ENCODE measurements at regions of chr10 and their contacts with region 1.

Region 1: DNA sequence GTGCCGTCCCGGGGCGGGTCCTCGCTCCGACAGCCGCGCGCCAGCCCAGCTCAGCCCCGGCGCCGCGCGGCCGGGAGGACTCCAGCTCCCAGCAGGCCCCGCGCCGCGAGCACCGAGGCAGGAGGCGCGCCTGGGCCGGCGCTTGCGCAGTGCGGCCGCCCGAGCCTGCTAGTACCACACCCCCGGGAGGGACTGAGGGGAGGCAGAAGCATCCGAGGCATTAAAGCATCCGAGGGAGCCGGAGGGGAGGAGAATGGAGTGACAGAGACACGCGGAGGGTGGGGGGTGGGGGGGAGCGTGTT is at the start of gene GRK5:
- DNase-seq: peak; percentile 96
- H3K4me3 Mint-ChIP-seq: peak within 1 kb of the TSS; percentile 94
- H3K27ac Mint-ChIP-seq: peak within 1 kb of the TSS; percentile 98
- H3K4me1 Mint-ChIP-seq: peaks cover 45% of the 10 kb centered on the region
- H3K27me3 Mint-ChIP-seq: no peaks in the 10 kb centered on the region
- total RNA-seq, gene GRK5: 26.0 to 27.5 TPM

Region 2: DNA sequence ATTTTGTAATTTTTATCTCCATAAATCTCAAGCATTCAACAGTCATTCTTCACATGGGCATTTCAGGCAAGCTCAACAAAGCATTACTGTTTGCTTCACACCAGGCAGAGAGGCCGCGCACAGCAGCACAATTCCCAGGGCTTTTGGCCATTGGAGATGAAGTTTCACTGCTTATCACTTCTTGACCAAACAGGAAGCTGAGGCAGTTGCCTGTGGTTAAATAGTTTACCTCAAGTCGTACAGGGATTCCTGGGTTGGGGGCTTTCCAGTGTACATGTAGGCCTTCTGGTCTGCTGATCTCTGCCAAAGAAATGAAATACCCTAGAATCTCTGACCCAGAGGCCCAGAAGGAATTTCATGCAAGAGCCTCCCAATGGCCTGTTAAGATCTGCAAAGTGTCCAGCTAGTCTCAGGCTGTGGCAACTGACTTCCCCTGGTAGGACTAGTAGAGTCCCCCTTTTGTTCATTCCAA is 17.5 kb before region 1 on chr10:
- CTCF ChIA-PET with region 1: interaction called, 15 read pairs
- POLR2A ChIA-PET with region 1: no interaction called
- DNase-seq: no peak
- H3K4me3 Mint-ChIP-seq: no peak overlapping the region
- H3K27ac Mint-ChIP-seq: no peak overlapping the region
- H3K4me1 Mint-ChIP-seq: peaks cover 22% of the 10 kb centered on the region
- H3K27me3 Mint-ChIP-seq: no peaks in the 10 kb centered on the region

Region 3: DNA sequence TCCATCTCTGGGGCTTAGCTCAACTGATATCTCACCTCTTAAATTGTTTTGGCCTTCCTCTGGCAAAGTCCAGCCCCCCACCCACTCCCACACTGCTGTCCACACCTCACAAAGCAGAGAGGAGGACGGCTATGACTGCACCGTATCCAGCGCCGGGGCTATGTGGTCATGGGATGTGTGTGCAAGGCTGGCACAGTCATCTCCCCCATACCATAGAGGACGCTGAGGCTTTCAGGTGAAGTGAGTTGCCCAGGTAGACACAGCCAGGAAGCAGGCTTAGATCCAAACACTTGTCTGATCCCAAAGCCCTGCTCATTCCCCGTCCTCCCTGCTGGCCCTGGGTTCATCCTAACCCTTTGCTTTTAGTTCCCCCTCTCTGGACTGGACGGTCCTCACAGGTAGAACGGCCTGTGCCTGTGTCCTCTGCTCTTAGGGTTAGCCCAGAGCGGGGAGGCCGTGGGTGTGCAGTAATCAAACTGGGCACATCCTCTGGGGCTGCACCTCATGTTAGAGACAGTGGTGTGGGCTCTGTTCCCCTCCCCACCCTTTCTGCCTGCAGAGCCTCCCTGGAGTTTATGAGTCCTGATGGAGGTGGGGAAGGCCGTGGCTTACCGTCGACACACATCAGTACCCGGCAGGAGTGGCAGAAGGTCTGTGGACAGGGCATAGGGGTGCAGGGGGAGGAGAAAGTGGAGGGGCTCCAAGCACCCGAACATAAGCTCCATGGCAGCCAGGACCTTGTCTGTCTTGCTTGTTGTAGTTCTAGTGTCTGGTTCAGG is 80.5 kb after region 1 on chr10:
- CTCF ChIA-PET with region 1: interaction called, 3 read pairs
- POLR2A ChIA-PET with region 1: interaction called, 10 read pairs
- DNase-seq: no peak
- H3K4me3 Mint-ChIP-seq: no peak overlapping the region
- H3K27ac Mint-ChIP-seq: no peak overlapping the region
- H3K4me1 Mint-ChIP-seq: peaks cover 88% of the 10 kb centered on the region
- H3K27me3 Mint-ChIP-seq: no peaks in the 10 kb centered on the region

Region 4: GRCh38 chr10:119305860-119306513 is 98.7 kb after region 1 on chr10:
- CTCF ChIA-PET with region 1: interaction called, 11 read pairs
- POLR2A ChIA-PET with region 1: interaction called, 3 read pairs
- DNase-seq: peak; percentile 87
- H3K4me3 Mint-ChIP-seq: peak overlapping the region; percentile 84
- H3K27ac Mint-ChIP-seq: peak overlapping the region; percentile 96
- H3K4me1 Mint-ChIP-seq: peaks cover 73% of the 10 kb centered on the region
- H3K27me3 Mint-ChIP-seq: peaks cover 14% of the 10 kb centered on the region

Region 5: GRCh38 chr10:119421887-119422681 is 214.8 kb after region 1 on chr10:
- CTCF ChIA-PET with region 1: interaction called, 10 read pairs
- POLR2A ChIA-PET with region 1: no interaction called
- DNase-seq: no peak
- H3K4me3 Mint-ChIP-seq: no peak overlapping the region
- H3K27ac Mint-ChIP-seq: no peak overlapping the region
- H3K4me1 Mint-ChIP-seq: no peaks in the 10 kb centered on the region
- H3K27me3 Mint-ChIP-seq: no peaks in the 10 kb centered on the region

Region 6: GRCh38 chr10:119445311-119445934 is 238.1 kb after region 1 on chr10:
- CTCF ChIA-PET with region 1: interaction called, 25 read pairs
- POLR2A ChIA-PET with region 1: no interaction called
- DNase-seq: peak; percentile 89
- H3K4me3 Mint-ChIP-seq: no peak overlapping the region
- H3K27ac Mint-ChIP-seq: no peak overlapping the region
- H3K4me1 Mint-ChIP-seq: peaks cover 14% of the 10 kb centered on the region
- H3K27me3 Mint-ChIP-seq: no peaks in the 10 kb centered on the region

Measured in activated CD4-positive, alpha-beta T cell treated with anti-CD3 and anti-CD28 coated beads, Interleukin-2, amount 10 ng/mL, durations not matched to agents 7 days and 5 days (primary cell).